ENCODE measurements at regions of chr18 and their contacts with region 1.

Region 1: GRCh38 chr18:8812631-8813030 is 107.3 kb downstream of the MTCL1 start:
- DNase-seq: no peak
- H3K4me3 ChIP-seq: no peak overlapping the region
- H3K27ac ChIP-seq: no peak overlapping the region
- H3K4me1 ChIP-seq: no peaks in the 10 kb centered on the region
- H3K27me3 ChIP-seq: no peaks in the 10 kb centered on the region
- CTCF ChIP-seq: no peak
- EP300 ChIP-seq: no peak
- POLR2A ChIP-seq: no peak

Region 2: GRCh38 chr18:8847900-8848299 is 35.3 kb after region 1 on chr18:
- intact Hi-C with region 1: loop called in 1 of 4 experiments (anchors 1 kb)
- DNase-seq: no peak
- H3K4me3 ChIP-seq: no peak overlapping the region
- H3K27ac ChIP-seq: no peak overlapping the region
- H3K4me1 ChIP-seq: no peaks in the 10 kb centered on the region
- H3K27me3 ChIP-seq: no peaks in the 10 kb centered on the region
- CTCF ChIP-seq: no peak
- EP300 ChIP-seq: no peak
- POLR2A ChIP-seq: no peak